MCF 10A (cell line): ENCODE measurements at regions of chr11 and their contacts with region 1.

Region 1: GRCh38 chr11:105862736-105863367 is 159.2 kb downstream of the MSANTD4 start:
- DNase-seq: peak; percentile 69
- H3K4me3 Mint-ChIP-seq: no peak overlapping the region
- H3K27ac Mint-ChIP-seq: no peak overlapping the region
- H3K4me1 Mint-ChIP-seq: peaks cover 6% of the 10 kb centered on the region
- H3K27me3 Mint-ChIP-seq: no peaks in the 10 kb centered on the region
- CTCF ChIP-seq: peak; percentile 69

Region 2: GRCh38 chr11:103927535-103927934 is 1935.3 kb before region 1 on chr11:
- CTCF ChIA-PET with region 1: interaction called, 3 read pairs
- POLR2A ChIA-PET with region 1: no interaction called
- intact Hi-C with region 1: loop called (anchors 2 kb)
- DNase-seq: peak; percentile 43
- H3K4me3 Mint-ChIP-seq: no peak overlapping the region
- H3K27ac Mint-ChIP-seq: no peak overlapping the region
- H3K4me1 Mint-ChIP-seq: peaks cover 7% of the 10 kb centered on the region
- H3K27me3 Mint-ChIP-seq: no peaks in the 10 kb centered on the region
- CTCF ChIP-seq: peak; percentile 54

Region 3: DNA sequence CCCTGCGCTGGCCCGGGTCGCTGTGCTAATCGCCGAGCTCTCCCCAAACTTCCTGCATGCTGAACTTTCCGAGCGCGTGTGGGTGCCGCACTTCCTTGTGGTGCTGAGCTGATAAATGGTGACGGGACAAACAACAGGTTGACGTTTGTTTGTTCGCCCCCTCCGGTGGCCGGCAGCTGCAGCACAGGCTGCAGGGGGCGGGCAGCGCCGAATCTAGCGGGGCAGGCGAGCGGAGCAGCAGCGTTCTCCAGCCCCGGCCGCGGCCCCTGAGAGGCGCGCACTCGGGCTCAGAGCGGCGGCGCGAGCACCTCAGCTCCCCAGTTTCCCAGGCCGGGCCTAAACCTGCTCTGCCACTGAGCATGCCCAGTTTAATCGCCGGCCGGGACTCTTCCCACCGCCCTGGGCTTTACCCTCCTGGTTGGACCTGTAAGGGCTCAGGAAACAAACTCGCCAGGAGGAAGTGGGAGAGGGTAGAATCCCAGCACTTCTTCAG is 1698.8 kb before region 1 on chr11 and contains the start of gene PDGFD:
- CTCF ChIA-PET with region 1: interaction called, 24 read pairs
- POLR2A ChIA-PET with region 1: interaction called, 3 read pairs
- intact Hi-C with region 1: no loop called
- DNase-seq: peak; percentile 35
- H3K4me3 Mint-ChIP-seq: peak within 1 kb of the TSS; percentile 81
- H3K27ac Mint-ChIP-seq: no peak within 1 kb of the TSS
- H3K4me1 Mint-ChIP-seq: no peaks in the 10 kb centered on the region
- H3K27me3 Mint-ChIP-seq: no peaks in the 10 kb centered on the region
- CTCF ChIP-seq: no peak
- total RNA-seq, gene PDGFD: 0.27 and 0.61 TPM in 2 replicates

Region 4: DNA sequence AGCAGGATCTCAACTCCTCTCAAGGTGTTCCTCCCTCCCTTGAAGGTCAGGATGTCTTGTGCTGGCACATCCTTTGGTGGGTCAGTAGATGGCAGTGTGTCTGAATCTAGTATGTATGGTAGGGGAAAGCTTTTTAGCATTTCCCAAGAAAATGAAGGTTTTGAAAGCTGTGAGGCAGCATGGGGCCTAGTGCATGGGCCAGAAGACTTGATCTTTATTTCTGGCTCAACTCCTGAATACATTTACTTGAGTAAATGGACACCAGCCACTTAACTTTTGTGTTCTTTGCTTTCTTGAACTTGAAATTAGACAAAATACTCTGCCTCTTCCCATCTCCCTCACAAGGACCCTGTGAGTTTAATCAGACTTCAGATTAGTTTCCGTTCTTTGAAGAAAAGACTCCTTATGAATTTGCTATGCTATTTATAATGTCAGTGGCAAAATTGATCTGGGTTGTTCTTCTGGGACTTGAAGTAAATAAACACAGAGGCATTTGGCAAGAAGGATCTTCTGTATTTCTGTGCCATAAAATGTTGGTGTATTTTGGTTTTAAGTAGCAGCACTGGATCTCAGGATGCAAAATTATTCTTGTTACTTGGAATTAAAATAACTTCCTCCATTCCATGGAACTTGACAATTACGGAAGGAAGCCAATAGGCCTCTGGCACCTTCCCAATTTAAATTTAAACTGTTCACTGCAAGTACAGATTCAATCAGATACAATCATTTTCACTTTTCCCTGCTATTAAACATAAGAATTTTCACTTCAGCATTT is 1253.4 kb before region 1 on chr11:
- CTCF ChIA-PET with region 1: interaction called, 10 read pairs
- POLR2A ChIA-PET with region 1: interaction called, 3 read pairs
- intact Hi-C with region 1: loop called (anchors 1 kb)
- DNase-seq: peak; percentile 59
- H3K4me3 Mint-ChIP-seq: no peak overlapping the region
- H3K27ac Mint-ChIP-seq: no peak overlapping the region
- H3K4me1 Mint-ChIP-seq: no peaks in the 10 kb centered on the region
- H3K27me3 Mint-ChIP-seq: no peaks in the 10 kb centered on the region
- CTCF ChIP-seq: peak; percentile 72

Region 5: DNA sequence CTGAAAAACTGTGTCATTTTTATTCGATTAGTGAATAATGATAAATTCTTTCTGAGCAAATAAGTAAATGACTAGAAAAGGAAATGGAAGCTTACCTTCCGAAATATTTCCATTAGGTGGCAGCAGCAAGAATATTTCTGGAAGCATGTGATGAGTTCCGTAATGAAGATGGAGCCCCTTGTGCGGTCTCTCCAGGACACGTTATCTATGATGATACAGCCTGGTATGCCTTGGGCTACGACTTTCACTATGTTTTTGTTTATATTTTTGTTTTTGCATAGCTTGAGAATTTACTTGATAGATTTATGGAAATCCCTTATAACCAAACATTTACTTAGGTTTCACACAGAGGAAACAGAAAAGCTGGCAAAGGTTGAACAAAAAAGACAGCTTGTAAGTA is 865.6 kb before region 1 on chr11:
- CTCF ChIA-PET with region 1: interaction called, 12 read pairs
- POLR2A ChIA-PET with region 1: no interaction called
- intact Hi-C with region 1: no loop called
- DNase-seq: no peak
- H3K4me3 Mint-ChIP-seq: no peak overlapping the region
- H3K27ac Mint-ChIP-seq: no peak overlapping the region
- H3K4me1 Mint-ChIP-seq: no peaks in the 10 kb centered on the region
- H3K27me3 Mint-ChIP-seq: no peaks in the 10 kb centered on the region
- CTCF ChIP-seq: peak; percentile 15

Region 6: DNA sequence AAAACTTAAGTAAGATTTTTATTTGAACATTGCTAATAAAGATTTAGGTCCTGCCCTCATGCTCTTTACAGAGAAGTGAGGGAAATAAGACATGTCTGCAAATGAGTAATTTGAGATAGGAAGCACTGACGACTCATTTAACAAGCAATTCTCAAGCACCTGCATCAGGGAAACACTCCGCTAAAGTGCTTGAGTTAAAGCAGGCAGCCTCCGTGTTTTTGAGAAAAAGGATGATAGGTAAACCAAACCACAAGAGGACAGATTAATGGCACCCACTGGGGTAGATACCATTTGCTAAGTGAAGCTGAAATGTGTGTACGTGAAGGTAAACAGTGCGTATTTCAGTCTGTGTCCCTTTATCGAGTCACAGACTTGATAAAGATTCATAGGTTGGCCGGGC is 538.7 kb before region 1 on chr11:
- CTCF ChIA-PET with region 1: no interaction called
- POLR2A ChIA-PET with region 1: no interaction called
- intact Hi-C with region 1: no loop called
- DNase-seq: no peak
- H3K4me3 Mint-ChIP-seq: no peak overlapping the region
- H3K27ac Mint-ChIP-seq: no peak overlapping the region
- H3K4me1 Mint-ChIP-seq: no peaks in the 10 kb centered on the region
- H3K27me3 Mint-ChIP-seq: no peaks in the 10 kb centered on the region
- CTCF ChIP-seq: no peak

Region 7: DNA sequence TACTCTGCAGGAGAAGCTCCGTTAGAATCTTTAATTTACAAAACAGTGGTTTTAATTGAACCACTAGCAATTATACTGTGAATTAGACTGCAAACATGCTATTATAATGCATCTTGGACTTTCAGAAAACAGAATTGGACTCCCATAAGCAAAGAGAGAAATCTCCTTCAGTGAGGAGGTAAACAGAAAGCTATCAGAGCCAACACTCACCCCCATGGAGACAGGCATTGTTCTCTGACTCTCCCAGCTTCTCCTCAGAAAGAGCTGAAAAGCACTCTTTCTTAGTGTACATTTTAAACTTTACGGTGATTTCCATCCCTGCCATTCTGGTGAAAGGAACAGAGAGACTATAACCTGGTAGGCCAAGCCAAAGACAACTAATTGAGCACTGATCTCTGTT is 76.1 kb before region 1 on chr11:
- CTCF ChIA-PET with region 1: no interaction called
- POLR2A ChIA-PET with region 1: no interaction called
- intact Hi-C with region 1: no loop called
- DNase-seq: no peak
- H3K4me3 Mint-ChIP-seq: no peak overlapping the region
- H3K27ac Mint-ChIP-seq: no peak overlapping the region
- H3K4me1 Mint-ChIP-seq: no peaks in the 10 kb centered on the region
- H3K27me3 Mint-ChIP-seq: no peaks in the 10 kb centered on the region
- CTCF ChIP-seq: no peak

Region 8: DNA sequence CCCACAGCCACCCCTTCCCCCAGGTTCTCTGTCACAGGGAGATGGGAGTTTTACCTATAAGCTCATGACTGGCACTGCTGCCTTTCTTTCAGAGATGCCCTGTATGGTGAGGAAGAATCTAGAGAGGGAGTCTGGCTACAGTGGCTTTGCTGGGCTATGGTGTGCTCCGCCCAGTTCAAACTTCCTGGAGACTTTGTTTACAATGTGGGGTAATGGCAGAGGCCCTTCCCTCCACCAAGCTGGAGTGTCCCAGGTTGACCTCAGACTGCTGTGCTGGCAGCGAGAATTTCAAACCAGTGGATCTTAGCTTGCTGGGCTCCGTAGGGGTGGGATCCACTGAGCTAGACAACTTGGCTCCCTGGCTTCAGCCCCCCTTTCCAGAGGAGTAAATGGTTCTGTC is 15.7 kb after region 1 on chr11:
- CTCF ChIA-PET with region 1: interaction called, 19 read pairs
- POLR2A ChIA-PET with region 1: no interaction called
- intact Hi-C with region 1: no loop called
- DNase-seq: no peak
- H3K4me3 Mint-ChIP-seq: no peak overlapping the region
- H3K27ac Mint-ChIP-seq: no peak overlapping the region
- H3K4me1 Mint-ChIP-seq: no peaks in the 10 kb centered on the region
- H3K27me3 Mint-ChIP-seq: no peaks in the 10 kb centered on the region
- CTCF ChIP-seq: no peak